PC-9 (cell line): ENCODE measurements at regions of chr6 and their contacts with region 1.

Region 1: GRCh38 chr6:33744001-33744848 is 2.5 kb downstream of the IP6K3 start:
- DNase-seq: peak; percentile 68 to 90
- H3K4me3 ChIP-seq: peak overlapping the region; percentile 18; the same call in 1 of the 2 replicates
- H3K27ac ChIP-seq: 0 out of 2 replicates have a peak overlapping the region, but pooled peaks have one; percentile 3
- H3K4me1 ChIP-seq: peaks cover 43% of the 10 kb centered on the region
- H3K27me3 ChIP-seq: no peaks in the 10 kb centered on the region
- CTCF ChIP-seq: peak; percentile 97

Region 2: DNA sequence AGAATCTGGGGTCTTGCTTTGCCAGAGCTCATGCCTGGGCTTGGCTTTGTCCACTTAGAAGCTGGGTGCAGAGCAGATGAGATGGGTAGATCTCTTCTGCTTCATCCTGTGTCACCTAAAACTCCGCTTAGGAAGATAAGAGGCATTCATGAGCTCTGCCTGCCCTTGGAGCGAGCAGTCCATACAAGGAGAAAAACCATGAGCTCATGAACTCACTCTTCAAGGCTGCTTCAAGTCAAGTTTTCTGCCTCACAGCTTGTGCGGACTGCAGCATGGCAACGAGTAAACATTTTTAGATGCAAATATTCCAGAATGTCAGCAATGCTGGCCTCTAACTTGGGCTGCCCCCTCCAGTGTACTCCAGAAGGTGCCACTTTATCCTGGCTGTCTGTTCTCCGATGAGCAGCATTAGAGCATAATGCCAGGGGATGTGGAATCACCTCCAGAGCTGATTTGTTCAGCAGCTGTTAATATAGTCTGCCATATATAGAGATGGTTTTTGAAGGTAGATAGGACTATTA is 22.1 kb before region 1 on chr6:
- CTCF ChIA-PET with region 1: interaction called, 7 read pairs
- POLR2A ChIA-PET with region 1: interaction called, 10 read pairs
- intact Hi-C with region 1: no loop called
- DNase-seq: no peak
- H3K4me3 ChIP-seq: no peak overlapping the region
- H3K27ac ChIP-seq: no peak overlapping the region
- H3K4me1 ChIP-seq: peaks cover 47% of the 10 kb centered on the region
- H3K27me3 ChIP-seq: no peaks in the 10 kb centered on the region
- CTCF ChIP-seq: no peak

Region 3: GRCh38 chr6:33761922-33762629 is 17.9 kb after region 1 on chr6:
- CTCF ChIA-PET with region 1: interaction called, 4 read pairs
- POLR2A ChIA-PET with region 1: no interaction called
- intact Hi-C with region 1: loop called (anchors 1 kb)
- DNase-seq: peak; percentile 50 to 77
- H3K4me3 ChIP-seq: no peak overlapping the region
- H3K27ac ChIP-seq: no peak overlapping the region
- H3K4me1 ChIP-seq: peaks cover 14% of the 10 kb centered on the region
- H3K27me3 ChIP-seq: no peaks in the 10 kb centered on the region
- CTCF ChIP-seq: peak; percentile 85